ENCODE measurements at regions of chr17 and their contacts with region 1.

Region 1: GRCh38 chr17:17077811-17078744 is 35.8 kb downstream of the MPRIP start:
- DNase-seq: peak; percentile 84 to 95
- H3K4me3 ChIP-seq: peak overlapping the region; percentile 36; the same call in 1 of the 2 replicates
- H3K27ac ChIP-seq: peak overlapping the region; percentile 85
- H3K4me1 ChIP-seq: peaks cover 79% of the 10 kb centered on the region
- H3K27me3 ChIP-seq: no peaks in the 10 kb centered on the region
- CTCF ChIP-seq: no peak

Region 2: GRCh38 chr17:17063546-17064122 is 14.4 kb before region 1 on chr17:
- CTCF ChIA-PET with region 1: no interaction called
- POLR2A ChIA-PET with region 1: no interaction called
- intact Hi-C with region 1: loop called (anchors 1 kb)
- DNase-seq: peak; percentile 56 to 84
- H3K4me3 ChIP-seq: no peak overlapping the region
- H3K27ac ChIP-seq: peak overlapping the region; percentile 35
- H3K4me1 ChIP-seq: peaks cover 76% of the 10 kb centered on the region
- H3K27me3 ChIP-seq: no peaks in the 10 kb centered on the region
- CTCF ChIP-seq: no peak

Region 3: GRCh38 chr17:17712268-17712924 is 634.3 kb after region 1 on chr17:
- CTCF ChIA-PET with region 1: no interaction called
- POLR2A ChIA-PET with region 1: no interaction called
- intact Hi-C with region 1: no loop called
- DNase-seq: peak; percentile 49 to 79
- H3K4me3 ChIP-seq: no peak overlapping the region
- H3K27ac ChIP-seq: peak overlapping the region; percentile 80
- H3K4me1 ChIP-seq: peaks cover 40% of the 10 kb centered on the region
- H3K27me3 ChIP-seq: no peaks in the 10 kb centered on the region
- CTCF ChIP-seq: no peak